Sciatic nerve (tissue), 2 donors: ENCODE measurements at regions of chr12 and their contacts with region 1.

Region 1: GRCh38 chr12:113462117-113462774 is 9.4 kb downstream of the LHX5 start:
- DNase-seq: peak; percentile 85
- ATAC-seq: peak; percentile 86

Region 2: DNA sequence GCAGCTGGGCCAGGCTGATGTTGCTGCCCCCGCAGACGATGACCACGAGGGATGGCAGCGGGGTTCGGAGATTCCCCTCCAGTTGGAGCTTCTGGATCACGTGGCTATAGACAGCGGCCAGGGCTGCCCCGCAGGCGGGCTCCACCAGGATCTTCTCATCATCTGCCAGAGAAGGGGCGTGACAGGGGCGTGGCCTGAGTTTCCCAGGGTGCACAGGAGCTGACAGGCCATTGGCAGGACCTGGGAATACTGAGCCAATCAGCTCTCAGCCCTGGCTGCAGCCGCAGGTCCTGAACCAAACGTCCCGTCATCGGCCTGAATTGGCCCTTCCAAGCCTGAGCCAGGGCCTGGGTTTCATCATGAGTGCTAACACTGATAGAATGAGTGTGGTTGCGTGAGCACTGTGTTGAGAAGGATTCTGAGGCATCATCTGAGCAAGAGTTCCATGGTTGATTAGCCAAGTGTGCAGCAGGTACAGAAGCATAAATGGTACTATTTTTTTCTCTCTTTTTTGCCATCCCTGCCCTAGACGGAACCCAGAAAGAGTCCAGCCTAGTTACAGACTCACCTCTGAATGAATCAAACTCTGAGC is 69.2 kb before region 1 on chr12:
- intact Hi-C with region 1: no loop called
- DNase-seq: no peak
- ATAC-seq: no peak

Region 3: DNA sequence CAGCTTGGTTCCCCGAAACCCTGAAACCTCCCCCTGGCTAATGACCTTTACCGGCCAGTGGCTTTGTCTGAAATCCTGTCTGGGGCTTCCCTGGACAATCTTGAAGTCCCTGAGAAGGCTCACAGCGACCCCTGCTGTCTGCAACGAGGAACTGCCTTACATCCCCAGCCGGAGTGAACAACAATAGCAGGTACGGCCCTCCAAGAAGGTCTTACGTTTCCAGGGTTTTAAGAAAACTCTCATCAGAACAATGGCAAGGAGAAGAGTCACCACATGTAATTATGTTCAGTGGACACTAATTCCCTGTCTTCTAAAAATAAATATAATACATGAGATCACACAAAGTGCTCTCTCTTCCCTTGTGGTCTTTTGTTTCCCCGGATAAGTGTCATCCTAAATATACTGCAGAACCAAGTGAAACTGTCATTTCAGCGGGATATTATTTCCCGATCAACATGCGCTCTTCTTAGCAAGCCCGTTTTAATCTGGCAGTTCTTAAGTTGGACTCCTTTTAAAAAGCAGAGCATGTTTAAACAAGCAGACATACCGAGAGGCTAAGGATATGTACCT is 450.6 kb after region 1 on chr12:
- intact Hi-C with region 1: loop called (anchors 10 kb)
- DNase-seq: peak; percentile 82
- ATAC-seq: peak; percentile 65